Ascending aorta (tissue), 2 donors: ENCODE measurements at regions of chr3 and their contacts with region 1.

Region 1: DNA sequence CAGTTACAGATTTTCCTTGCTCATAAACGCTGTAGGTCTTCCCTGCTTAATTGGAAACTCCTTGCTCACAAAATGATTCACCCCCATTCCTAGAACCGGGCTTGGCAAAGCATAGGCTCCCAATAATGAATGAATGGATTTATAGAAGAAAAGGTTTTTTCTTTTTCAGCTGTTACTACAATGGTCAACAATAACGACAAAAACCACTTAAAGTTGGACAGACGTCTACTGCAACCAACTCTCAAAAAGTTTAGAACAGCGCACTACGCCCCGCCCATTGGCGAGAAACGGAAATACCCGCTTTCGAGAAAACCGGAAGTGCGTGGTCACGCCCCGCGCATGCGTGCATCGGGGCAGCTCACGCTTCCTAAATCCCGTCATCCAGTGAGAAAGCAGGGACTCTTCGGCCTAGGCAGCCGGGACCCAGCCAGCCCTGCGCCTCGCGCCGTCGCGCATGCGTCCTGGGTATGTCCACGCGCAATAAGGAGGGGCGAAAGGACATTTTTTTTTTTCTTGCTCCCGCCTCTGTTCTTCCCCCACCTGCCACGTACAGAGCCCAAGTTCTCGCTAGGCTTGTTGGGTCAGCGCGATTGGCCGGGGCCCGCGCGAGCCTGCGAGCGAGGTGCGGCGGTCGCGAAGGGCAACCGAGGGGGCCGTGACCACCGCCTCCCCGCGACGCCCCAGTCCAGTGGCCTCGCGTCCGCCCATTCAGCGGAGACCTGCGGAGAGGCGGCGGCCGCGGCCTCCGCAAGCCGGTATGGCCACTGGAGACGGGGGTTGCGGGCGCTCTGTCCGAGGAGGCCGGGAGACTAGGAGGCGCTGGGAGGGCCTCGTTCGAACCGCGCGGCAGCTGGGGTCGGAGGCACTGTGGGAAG is at the start of gene TFG:
- DNase-seq: peak; percentile 93 to 99
- H3K4me3 ChIP-seq: peak within 1 kb of the TSS; percentile 82 to 84
- H3K27ac ChIP-seq: peak within 1 kb of the TSS; percentile 95 to 97
- H3K4me1 ChIP-seq: peaks cover 0 to 22% of the 10 kb centered on the region in 2 donors
- H3K27me3 ChIP-seq: no peaks in the 10 kb centered on the region
- CTCF ChIP-seq: no peak
- total RNA-seq, gene TFG: 64.9 TPM

Region 2: GRCh38 chr3:100400780-100401673 is 308.2 kb before region 1 on chr3 and contains the starts of genes LNP1 and TOMM70:
- intact Hi-C with region 1: loop called (anchors 2 kb)
- DNase-seq: peak; percentile 92 to 99
- H3K4me3 ChIP-seq: peak within 1 kb of the TSS; percentile 89 to 92
- H3K27ac ChIP-seq: peak within 1 kb of the TSS; percentile 90 to 91
- H3K4me1 ChIP-seq: peaks cover 10 to 30% of the 10 kb centered on the region in 2 donors
- H3K27me3 ChIP-seq: no peaks in the 10 kb centered on the region
- CTCF ChIP-seq: no peak
- total RNA-seq, gene LNP1: 1.3 TPM
- total RNA-seq, gene TOMM70: 16.4 TPM

Region 3: GRCh38 chr3:100662113-100662813 is 46.9 kb before region 1 on chr3:
- intact Hi-C with region 1: no loop called
- DNase-seq: no peak
- H3K4me3 ChIP-seq: no peak overlapping the region
- H3K27ac ChIP-seq: no peak overlapping the region
- H3K4me1 ChIP-seq: no peaks in the 10 kb centered on the region
- H3K27me3 ChIP-seq: no peaks in the 10 kb centered on the region
- CTCF ChIP-seq: no peak